ENCODE measurements at regions of chr1 and their contacts with region 1.

Region 1: GRCh38 chr1:111720274-111720976 is 18.8 kb downstream of the INKA2 start:
- DNase-seq: no peak
- ATAC-seq: no peak
- H3K4me3 Mint-ChIP-seq: no peak overlapping the region
- H3K27ac Mint-ChIP-seq: no peak overlapping the region
- H3K4me1 Mint-ChIP-seq: peaks cover 16% of the 10 kb centered on the region
- H3K27me3 Mint-ChIP-seq: no peaks in the 10 kb centered on the region

Region 2: DNA sequence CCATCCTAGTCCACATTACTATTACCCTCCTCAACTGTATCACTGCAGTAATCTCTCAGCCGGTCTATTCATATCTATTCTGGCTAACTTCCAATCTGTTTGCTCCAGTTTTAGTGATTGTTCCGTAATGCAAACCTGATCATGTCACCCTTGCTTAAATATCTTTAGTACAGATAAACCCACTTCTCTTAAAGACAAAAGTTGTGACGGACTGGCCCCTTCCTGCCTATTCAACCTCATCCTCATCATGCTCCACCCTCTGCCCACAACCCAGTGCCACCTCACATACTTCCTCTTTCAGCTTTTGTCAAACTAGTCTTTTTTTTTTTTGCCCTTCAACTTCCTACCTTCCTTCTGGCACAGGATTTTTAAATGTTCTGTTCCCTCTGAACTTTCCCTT is 249.4 kb before region 1 on chr1:
- CTCF ChIA-PET with region 1: interaction called, 13 read pairs
- POLR2A ChIA-PET with region 1: no interaction called
- intact Hi-C with region 1: no loop called
- DNase-seq: peak; percentile 76
- ATAC-seq: peak; percentile 82
- H3K4me3 Mint-ChIP-seq: no peak overlapping the region
- H3K27ac Mint-ChIP-seq: no peak overlapping the region
- H3K4me1 Mint-ChIP-seq: peaks cover 35% of the 10 kb centered on the region
- H3K27me3 Mint-ChIP-seq: no peaks in the 10 kb centered on the region

Region 3: DNA sequence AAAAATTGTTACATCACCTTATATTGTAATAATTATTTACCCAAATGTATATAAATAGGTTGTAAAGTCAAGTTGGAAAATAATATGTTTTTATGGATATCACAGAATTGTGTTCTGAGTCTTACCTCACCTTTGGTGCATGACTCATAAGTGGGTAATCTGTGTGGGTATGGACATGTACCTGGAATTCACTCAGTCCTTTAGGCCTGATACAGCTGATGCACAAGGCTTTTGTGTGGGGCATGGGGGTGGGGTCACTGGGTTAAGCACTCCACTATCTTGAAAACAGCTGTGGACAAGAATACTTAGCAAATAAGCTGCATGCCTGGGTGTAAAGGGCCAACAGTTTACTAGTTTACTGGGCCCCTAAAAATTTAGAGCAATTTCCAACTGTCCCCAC is 15.6 kb before region 1 on chr1:
- CTCF ChIA-PET with region 1: interaction called, 51 read pairs
- POLR2A ChIA-PET with region 1: no interaction called
- intact Hi-C with region 1: no loop called
- DNase-seq: no peak
- ATAC-seq: peak; percentile 65
- H3K4me3 Mint-ChIP-seq: no peak overlapping the region
- H3K27ac Mint-ChIP-seq: peak overlapping the region; percentile 44
- H3K4me1 Mint-ChIP-seq: peaks cover 51% of the 10 kb centered on the region
- H3K27me3 Mint-ChIP-seq: no peaks in the 10 kb centered on the region

Region 4: DNA sequence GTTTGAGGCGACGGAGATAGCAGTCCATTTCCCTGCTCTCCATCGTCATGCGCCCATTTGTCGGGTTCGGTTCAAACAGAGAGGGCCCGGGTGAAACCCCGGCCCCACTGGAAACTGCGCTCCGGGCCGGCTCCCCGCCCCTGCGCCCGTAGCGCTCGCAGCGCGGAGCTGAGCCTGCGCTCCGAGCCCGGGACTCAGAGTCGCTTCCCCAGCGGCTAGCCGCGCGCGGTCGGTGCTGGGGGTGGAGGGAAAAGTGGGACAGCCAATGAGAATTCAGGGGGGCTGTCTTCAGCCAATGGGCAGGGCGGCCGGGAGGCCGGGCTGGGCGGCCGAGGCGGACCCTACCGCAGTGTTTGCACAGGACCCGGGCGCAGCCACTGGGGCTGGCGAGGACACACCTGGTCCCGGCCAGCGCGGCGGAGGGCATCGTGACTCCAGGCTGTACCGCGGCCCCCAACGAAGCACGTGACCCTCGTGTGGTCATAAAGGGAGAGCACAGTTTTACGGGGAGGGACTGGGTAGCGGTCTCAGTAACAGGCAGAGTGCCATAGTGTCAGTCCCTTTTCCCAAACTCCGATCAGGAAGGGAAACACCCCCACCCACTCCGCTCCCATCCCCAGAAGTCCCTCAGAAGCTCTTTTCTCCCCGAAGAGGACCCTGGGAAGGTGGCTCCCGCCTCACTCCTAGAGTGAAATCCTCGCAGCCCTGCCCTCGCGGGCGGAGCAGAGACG is 18.9 kb after region 1 on chr1 and contains the start of gene INKA2:
- CTCF ChIA-PET with region 1: interaction called, 39 read pairs
- POLR2A ChIA-PET with region 1: no interaction called
- intact Hi-C with region 1: no loop called
- DNase-seq: peak; percentile 89
- ATAC-seq: peak; percentile 87
- H3K4me3 Mint-ChIP-seq: peak within 1 kb of the TSS; percentile 80
- H3K27ac Mint-ChIP-seq: peak within 1 kb of the TSS; percentile 11
- H3K4me1 Mint-ChIP-seq: peaks cover 15% of the 10 kb centered on the region
- H3K27me3 Mint-ChIP-seq: peaks cover 32% of the 10 kb centered on the region
- total RNA-seq, gene INKA2: 0.25 to 0.49 TPM

Region 5: DNA sequence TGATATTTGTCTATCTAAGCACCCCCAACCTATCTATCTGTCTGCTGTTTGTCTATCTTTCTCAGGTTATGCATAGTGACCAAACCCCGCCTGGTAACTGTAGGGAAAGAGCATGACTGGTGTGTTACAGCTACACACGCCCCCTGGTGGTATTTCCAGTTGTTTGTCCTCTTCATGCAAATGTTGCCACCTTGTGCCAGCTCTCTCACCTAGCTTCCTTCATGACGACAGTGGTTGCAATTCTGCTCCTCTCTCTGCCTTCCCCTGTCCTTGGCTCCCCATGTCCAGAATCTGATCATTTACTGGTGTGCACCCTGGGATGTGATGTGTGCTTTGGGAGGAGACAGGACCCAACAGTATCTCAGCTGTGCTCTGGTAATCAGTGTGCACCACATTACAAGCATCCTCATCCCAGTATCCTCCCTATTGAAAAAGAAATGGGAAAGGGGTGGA is 26.9 kb after region 1 on chr1:
- CTCF ChIA-PET with region 1: interaction called, 44 read pairs
- POLR2A ChIA-PET with region 1: no interaction called
- intact Hi-C with region 1: loop called (anchors 1 kb)
- DNase-seq: peak; percentile 86
- ATAC-seq: peak; percentile 98
- H3K4me3 Mint-ChIP-seq: no peak overlapping the region
- H3K27ac Mint-ChIP-seq: no peak overlapping the region
- H3K4me1 Mint-ChIP-seq: peaks cover 2% of the 10 kb centered on the region
- H3K27me3 Mint-ChIP-seq: peaks cover 5% of the 10 kb centered on the region

Measured in activated CD4-positive, alpha-beta T cell treated with anti-CD3 and anti-CD28 coated beads for 36 hours (primary cell).